Panc1 (cell line): ENCODE measurements at regions of chr7 and their contacts with region 1.

Region 1: GRCh38 chr7:30740424-30741181 is 11.3 kb upstream of the INMT start:
- DNase-seq: peak; percentile 62
- ATAC-seq: peak; percentile 92
- H3K4me3 ChIP-seq: no peak overlapping the region
- H3K27ac ChIP-seq: no peak overlapping the region
- H3K4me1 ChIP-seq: no peaks in the 10 kb centered on the region
- H3K27me3 ChIP-seq: peaks cover 4% of the 10 kb centered on the region; the same call in 1 of the 2 replicates
- CTCF ChIP-seq: peak; percentile 100

Region 2: GRCh38 chr7:30625283-30625682 is 115.3 kb before region 1 on chr7:
- CTCF ChIA-PET with region 1: interaction called, 9 read pairs
- POLR2A ChIA-PET with region 1: no interaction called
- in situ Hi-C with region 1: no loop called
- intact Hi-C with region 1: loop called (anchors 5 kb)
- DNase-seq: no peak
- ATAC-seq: peak; percentile 53; the same call in 1 of the 2 replicates
- H3K4me3 ChIP-seq: no peak overlapping the region
- H3K27ac ChIP-seq: no peak overlapping the region
- H3K4me1 ChIP-seq: no peaks in the 10 kb centered on the region
- H3K27me3 ChIP-seq: no peaks in the 10 kb centered on the region
- CTCF ChIP-seq: no peak; the same call in 1 of the 2 replicates